ENCODE measurements at regions of chr5 and their contacts with region 1.

Region 1: DNA sequence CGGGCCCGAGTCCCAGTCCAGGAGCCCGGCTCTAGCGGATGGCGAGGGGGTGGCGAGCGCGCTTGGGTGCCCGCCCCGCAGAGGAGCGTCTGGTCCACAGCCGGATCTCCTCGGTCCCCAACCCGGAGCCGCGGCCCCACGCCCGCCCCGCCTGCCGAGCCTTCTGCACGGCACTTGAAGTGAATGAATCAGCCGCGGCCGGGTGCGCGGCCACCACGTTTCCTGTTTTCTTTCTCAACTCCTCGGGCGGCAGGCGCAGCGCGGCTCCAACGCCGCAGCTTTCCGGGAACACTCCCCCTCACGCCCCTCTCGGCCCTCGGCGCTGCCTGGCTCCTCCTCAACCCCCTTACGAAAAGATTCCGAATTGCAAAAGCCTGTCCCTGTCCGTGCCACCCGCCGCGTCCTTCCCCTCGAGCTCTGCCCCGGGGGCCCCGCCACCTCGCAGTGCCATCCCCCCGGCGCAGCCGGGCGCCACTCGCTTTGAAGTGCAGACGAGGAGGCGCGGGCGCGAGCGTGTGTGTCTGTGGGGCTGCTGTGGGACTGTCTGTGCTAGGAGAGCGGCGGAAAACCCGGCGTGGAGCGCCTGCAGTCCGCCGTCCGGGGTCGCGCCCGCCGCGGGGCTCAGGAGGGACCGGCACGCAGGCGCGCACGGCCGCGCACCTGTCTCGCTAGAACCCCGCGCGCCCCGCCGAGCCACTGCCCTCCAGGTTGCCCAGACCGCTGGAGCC is 456.6 kb downstream of the RAB3C start:
- H3K4me3 Mint-ChIP-seq: peak overlapping the region; percentile 95
- H3K27ac Mint-ChIP-seq: peak overlapping the region; percentile 81
- H3K4me1 Mint-ChIP-seq: peaks cover 20% of the 10 kb centered on the region
- H3K27me3 Mint-ChIP-seq: peaks cover 4% of the 10 kb centered on the region

Region 2: DNA sequence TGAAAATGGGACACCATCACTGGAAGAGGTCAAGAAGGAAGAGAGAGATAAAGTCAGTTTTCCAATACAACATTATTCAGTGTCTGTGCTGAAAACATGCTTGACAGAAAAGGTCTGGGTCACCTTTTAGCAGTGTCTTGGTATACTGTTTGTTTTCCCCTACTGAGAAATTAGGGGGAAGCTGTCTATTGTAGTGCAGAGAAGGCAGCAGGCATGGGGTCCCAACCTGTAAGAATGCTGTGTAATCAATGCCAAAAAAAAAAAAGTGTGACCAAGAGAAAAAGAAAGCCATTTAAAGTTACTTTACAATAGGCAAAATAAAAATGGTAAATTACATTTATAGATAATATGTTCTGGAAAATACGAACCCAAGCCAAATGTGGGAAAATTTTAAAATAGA is 317.3 kb before region 1 on chr5:
- intact Hi-C with region 1: no loop called
- H3K4me3 Mint-ChIP-seq: no peak overlapping the region
- H3K27ac Mint-ChIP-seq: no peak overlapping the region
- H3K4me1 Mint-ChIP-seq: no peaks in the 10 kb centered on the region
- H3K27me3 Mint-ChIP-seq: no peaks in the 10 kb centered on the region

Region 3: GRCh38 chr5:59126708-59127573 is 87.5 kb after region 1 on chr5:
- intact Hi-C with region 1: loop called (anchors 1 kb)
- H3K4me3 Mint-ChIP-seq: no peak overlapping the region
- H3K27ac Mint-ChIP-seq: no peak overlapping the region
- H3K4me1 Mint-ChIP-seq: no peaks in the 10 kb centered on the region
- H3K27me3 Mint-ChIP-seq: no peaks in the 10 kb centered on the region

Region 4: GRCh38 chr5:59174248-59174844 is 134.9 kb after region 1 on chr5:
- intact Hi-C with region 1: loop called (anchors 5 kb)
- H3K4me3 Mint-ChIP-seq: no peak overlapping the region
- H3K27ac Mint-ChIP-seq: no peak overlapping the region
- H3K4me1 Mint-ChIP-seq: peaks cover 9% of the 10 kb centered on the region
- H3K27me3 Mint-ChIP-seq: no peaks in the 10 kb centered on the region

Region 5: GRCh38 chr5:59238126-59238902 is 198.9 kb after region 1 on chr5:
- intact Hi-C with region 1: no loop called
- H3K4me3 Mint-ChIP-seq: no peak overlapping the region
- H3K27ac Mint-ChIP-seq: no peak overlapping the region
- H3K4me1 Mint-ChIP-seq: no peaks in the 10 kb centered on the region
- H3K27me3 Mint-ChIP-seq: no peaks in the 10 kb centered on the region

Region 6: GRCh38 chr5:59249160-59249559 is 209.7 kb after region 1 on chr5:
- intact Hi-C with region 1: no loop called
- H3K4me3 Mint-ChIP-seq: no peak overlapping the region
- H3K27ac Mint-ChIP-seq: no peak overlapping the region
- H3K4me1 Mint-ChIP-seq: no peaks in the 10 kb centered on the region
- H3K27me3 Mint-ChIP-seq: no peaks in the 10 kb centered on the region

Region 7: GRCh38 chr5:59380350-59380951 is 341.0 kb after region 1 on chr5:
- intact Hi-C with region 1: loop called (anchors 10 kb)
- H3K4me3 Mint-ChIP-seq: no peak overlapping the region
- H3K27ac Mint-ChIP-seq: no peak overlapping the region
- H3K4me1 Mint-ChIP-seq: no peaks in the 10 kb centered on the region
- H3K27me3 Mint-ChIP-seq: no peaks in the 10 kb centered on the region

Measured in dendritic cell treated with granulocyte-macrophage colony-stimulating factor and Interleukin-4, amounts not matched to agents 40 ng/mL and 50 ng/mL, for 4 days (primary cell).